Left colon (tissue), 2 donors: ENCODE measurements at regions of chr6 and their contacts with region 1.

Region 1: GRCh38 chr6:119349323-119350042 is at the start of gene MAN1A1:
- DNase-seq: peak; percentile 84 to 91
- ATAC-seq: peak; percentile 84
- total RNA-seq, gene MAN1A1: 68.6 to 94.3 TPM

Region 2: DNA sequence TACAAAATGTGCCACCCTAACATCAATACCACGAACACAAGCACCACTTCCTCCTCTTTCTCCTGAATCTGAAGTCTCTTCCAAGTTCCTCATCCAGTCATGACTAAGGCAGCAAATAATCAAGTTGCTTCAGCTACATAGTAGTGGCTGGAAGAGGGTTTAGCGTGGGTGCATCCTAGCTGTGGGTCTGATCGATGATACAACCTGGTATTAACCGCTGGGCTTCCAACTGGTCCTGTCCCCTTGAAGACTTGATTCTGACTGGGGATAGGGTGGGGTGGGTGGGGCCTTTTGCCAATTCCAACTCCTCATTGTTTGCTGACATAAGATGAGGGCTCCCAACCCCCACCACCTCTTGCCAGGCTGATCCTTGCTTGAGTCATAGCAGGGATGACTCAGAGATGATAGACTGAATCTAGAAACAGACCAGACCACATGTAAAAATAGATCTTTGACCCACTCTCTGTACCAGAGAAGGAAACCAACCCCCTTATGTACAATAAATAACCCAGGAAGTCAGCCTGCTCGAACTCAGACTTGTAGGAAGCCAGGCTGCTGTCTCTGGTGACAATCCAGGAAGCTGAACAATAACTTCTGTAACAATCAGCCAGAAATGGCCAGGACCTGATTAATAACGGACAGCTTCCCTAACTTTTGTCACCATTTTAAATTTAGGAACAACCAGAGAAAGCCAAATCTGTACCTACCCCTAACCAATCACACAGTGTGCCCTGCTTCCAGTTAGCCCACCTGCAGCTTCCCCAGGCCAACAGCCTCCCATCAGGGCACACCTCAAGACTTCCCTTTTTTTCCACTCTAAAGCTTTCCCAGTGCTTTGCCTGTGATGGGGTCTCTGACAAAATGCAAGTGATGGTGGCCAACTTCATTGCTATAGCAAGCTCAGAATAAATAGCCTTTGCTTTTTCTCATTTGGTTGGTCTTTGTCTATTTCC is 202.1 kb before region 1 on chr6:
- intact Hi-C with region 1: loop called in 1 of 2 experiments (anchors 10 kb)
- DNase-seq: peak; percentile 52 to 64
- ATAC-seq: peak; percentile 93

Region 3: GRCh38 chr6:119541132-119541905 is 191.8 kb after region 1 on chr6:
- intact Hi-C with region 1: loop called in 1 of 2 experiments (anchors 10 kb)
- DNase-seq: no peak
- ATAC-seq: peak; percentile 69